ENCODE measurements at regions of chr16 and their contacts with region 1.

Region 1: GRCh38 chr16:87017365-87018012 is 299.7 kb downstream of the C16orf95 start:
- DNase-seq: peak; percentile 88
- H3K4me3 ChIP-seq: peak overlapping the region in 1 of 3 experiments; percentile 8
- H3K27ac ChIP-seq: peak overlapping the region; percentile 21
- H3K4me1 ChIP-seq: peaks cover 15% of the 10 kb centered on the region
- H3K27me3 ChIP-seq: no peaks in the 10 kb centered on the region
- CTCF ChIP-seq: peak; percentile 50 to 52
- POLR2A ChIP-seq: no peak

Region 2: DNA sequence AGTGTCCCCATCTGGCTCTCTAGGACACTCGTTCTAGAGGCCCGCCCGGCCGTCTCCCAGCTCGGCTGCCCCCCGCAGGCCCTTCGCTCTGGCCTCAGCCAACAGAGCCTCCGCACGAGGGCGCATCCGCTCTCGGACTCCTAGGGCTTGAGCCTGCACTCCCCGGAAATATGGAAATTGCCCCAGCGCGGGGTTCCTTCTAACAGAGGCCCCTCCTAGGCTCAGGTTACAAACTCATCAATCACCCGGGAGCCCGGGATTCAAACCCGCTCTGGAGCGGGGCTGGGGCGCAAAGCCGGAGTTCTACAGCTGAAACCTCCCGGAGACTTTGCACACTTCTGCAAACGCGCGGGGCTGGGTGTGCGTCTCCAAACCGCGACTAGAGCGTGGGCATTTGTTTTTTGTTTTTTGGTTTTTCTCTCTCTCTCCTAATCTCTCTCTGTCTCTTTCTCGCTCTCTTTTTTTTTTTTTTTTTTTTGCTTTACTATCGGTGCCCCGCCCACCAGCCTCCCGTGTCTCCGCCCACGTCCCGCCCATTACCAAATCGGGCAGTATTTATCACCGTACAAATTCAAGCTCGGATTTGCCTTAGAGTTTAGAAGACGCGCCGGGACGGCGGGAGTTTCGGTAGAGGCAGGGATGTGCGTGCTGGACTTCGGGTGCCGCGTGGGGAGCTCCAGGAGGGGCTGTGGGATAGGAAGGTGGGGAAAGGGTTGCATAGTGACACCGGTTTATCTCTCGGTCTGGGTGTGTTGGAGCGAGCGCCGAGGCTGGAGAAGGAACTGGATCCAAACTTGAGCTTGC is 441.5 kb before region 1 on chr16:
- CTCF ChIA-PET with region 1: interaction called, 15 read pairs
- POLR2A ChIA-PET with region 1: interaction called, 3 read pairs
- dilution Hi-C with region 1: no loop called
- intact Hi-C with region 1: no loop called
- DNase-seq: peak; percentile 92
- H3K4me3 ChIP-seq: peak overlapping the region; percentile 33 to 67 (median 62)
- H3K27ac ChIP-seq: peak overlapping the region; percentile 82
- H3K4me1 ChIP-seq: peaks cover 56% of the 10 kb centered on the region
- H3K27me3 ChIP-seq: no peaks in the 10 kb centered on the region
- CTCF ChIP-seq: peak; percentile 73 to 74
- POLR2A ChIP-seq: peak; percentile 83

Region 3: GRCh38 chr16:86823895-86824671 is 193.4 kb before region 1 on chr16:
- CTCF ChIA-PET with region 1: interaction called, 3 read pairs
- POLR2A ChIA-PET with region 1: no interaction called
- dilution Hi-C with region 1: no loop called
- intact Hi-C with region 1: loop called (anchors 2 kb)
- DNase-seq: peak; percentile 87
- H3K4me3 ChIP-seq: peak overlapping the region in 1 of 3 experiments; percentile 7
- H3K27ac ChIP-seq: peak overlapping the region; percentile 93
- H3K4me1 ChIP-seq: peaks cover 50% of the 10 kb centered on the region
- H3K27me3 ChIP-seq: no peaks in the 10 kb centered on the region
- CTCF ChIP-seq: no peak
- POLR2A ChIP-seq: peak; percentile 50

Region 4: GRCh38 chr16:86925067-86925774 is 92.3 kb before region 1 on chr16:
- CTCF ChIA-PET with region 1: interaction called, 22 read pairs
- POLR2A ChIA-PET with region 1: no interaction called
- dilution Hi-C with region 1: no loop called
- intact Hi-C with region 1: no loop called
- DNase-seq: peak; percentile 86
- H3K4me3 ChIP-seq: no peak overlapping the region
- H3K27ac ChIP-seq: peak overlapping the region; percentile 33
- H3K4me1 ChIP-seq: peaks cover 46% of the 10 kb centered on the region
- H3K27me3 ChIP-seq: no peaks in the 10 kb centered on the region
- CTCF ChIP-seq: no peak
- POLR2A ChIP-seq: no peak

Region 5: DNA sequence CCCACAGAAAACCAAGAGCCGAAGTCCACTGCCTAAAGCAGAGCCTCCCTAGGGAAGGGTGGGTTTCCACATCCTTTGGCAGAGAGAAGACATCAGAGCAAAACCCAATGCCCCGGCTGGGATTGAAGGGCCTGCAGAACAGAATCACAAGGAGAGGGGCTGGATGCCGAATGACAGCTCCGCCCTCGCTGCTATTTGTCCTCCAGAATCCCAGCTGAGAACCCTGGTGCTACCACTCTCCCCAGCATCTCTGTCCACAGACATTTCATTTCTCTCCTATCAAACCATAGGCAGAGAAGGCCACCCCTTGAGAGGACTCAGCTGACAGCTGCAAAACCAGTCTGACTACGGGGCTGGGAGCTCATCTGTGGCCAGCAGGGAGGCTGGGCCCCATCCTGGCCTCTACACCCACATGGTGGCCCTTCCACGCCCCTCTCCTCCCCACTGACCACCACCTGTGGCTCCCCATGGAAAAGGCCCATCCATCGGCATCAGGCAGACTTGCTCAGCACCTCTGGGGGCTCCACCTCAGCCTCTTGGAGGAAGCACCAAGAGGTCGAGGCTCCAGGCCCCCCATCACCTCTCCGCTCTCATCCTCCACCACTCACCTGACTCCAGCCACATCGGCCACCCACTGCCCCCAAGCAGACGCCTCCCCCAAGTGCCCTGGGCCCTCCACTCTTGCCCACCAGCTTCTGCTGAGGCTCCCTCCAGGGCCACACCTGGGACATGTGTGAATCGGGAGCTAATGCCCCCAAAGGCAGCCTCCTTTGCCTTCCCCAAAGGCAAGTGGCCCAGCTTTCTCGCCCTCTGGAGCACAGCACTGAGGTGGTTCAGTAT is 11.2 kb after region 1 on chr16:
- CTCF ChIA-PET with region 1: interaction called, 28 read pairs
- POLR2A ChIA-PET with region 1: no interaction called
- dilution Hi-C with region 1: no loop called
- intact Hi-C with region 1: no loop called
- DNase-seq: no peak
- H3K4me3 ChIP-seq: no peak overlapping the region
- H3K27ac ChIP-seq: no peak overlapping the region
- H3K4me1 ChIP-seq: no peaks in the 10 kb centered on the region
- H3K27me3 ChIP-seq: peaks cover 0 to 4% of the 10 kb centered on the region in 2 experiments
- CTCF ChIP-seq: no peak
- POLR2A ChIP-seq: no peak

Region 6: GRCh38 chr16:87076950-87077749 is 59.7 kb after region 1 on chr16:
- CTCF ChIA-PET with region 1: interaction called, 10 read pairs
- POLR2A ChIA-PET with region 1: no interaction called
- dilution Hi-C with region 1: no loop called
- intact Hi-C with region 1: no loop called
- DNase-seq: peak; percentile 87
- H3K4me3 ChIP-seq: no peak overlapping the region
- H3K27ac ChIP-seq: peak overlapping the region; percentile 52
- H3K4me1 ChIP-seq: peaks cover 11% of the 10 kb centered on the region
- H3K27me3 ChIP-seq: no peaks in the 10 kb centered on the region
- CTCF ChIP-seq: peak; percentile 88 to 91
- POLR2A ChIP-seq: no peak